ENCODE measurements at regions of chr2 and their contacts with region 1.

Region 1: GRCh38 chr2:217650716-217651360 is 352.0 kb downstream of the TNS1 start:
- DNase-seq: peak; percentile 43
- ATAC-seq: peak; percentile 87
- H3K4me3 Mint-ChIP-seq: no peak overlapping the region
- H3K27ac Mint-ChIP-seq: no peak overlapping the region
- H3K4me1 Mint-ChIP-seq: peaks cover 3% of the 10 kb centered on the region
- H3K27me3 Mint-ChIP-seq: peaks cover 2% of the 10 kb centered on the region

Region 2: GRCh38 chr2:217301142-217301925 is 349.5 kb before region 1 on chr2:
- CTCF ChIA-PET with region 1: no interaction called
- POLR2A ChIA-PET with region 1: no interaction called
- intact Hi-C with region 1: no loop called
- DNase-seq: no peak
- ATAC-seq: no peak
- H3K4me3 Mint-ChIP-seq: no peak overlapping the region
- H3K27ac Mint-ChIP-seq: no peak overlapping the region
- H3K4me1 Mint-ChIP-seq: no peaks in the 10 kb centered on the region
- H3K27me3 Mint-ChIP-seq: no peaks in the 10 kb centered on the region

Region 3: DNA sequence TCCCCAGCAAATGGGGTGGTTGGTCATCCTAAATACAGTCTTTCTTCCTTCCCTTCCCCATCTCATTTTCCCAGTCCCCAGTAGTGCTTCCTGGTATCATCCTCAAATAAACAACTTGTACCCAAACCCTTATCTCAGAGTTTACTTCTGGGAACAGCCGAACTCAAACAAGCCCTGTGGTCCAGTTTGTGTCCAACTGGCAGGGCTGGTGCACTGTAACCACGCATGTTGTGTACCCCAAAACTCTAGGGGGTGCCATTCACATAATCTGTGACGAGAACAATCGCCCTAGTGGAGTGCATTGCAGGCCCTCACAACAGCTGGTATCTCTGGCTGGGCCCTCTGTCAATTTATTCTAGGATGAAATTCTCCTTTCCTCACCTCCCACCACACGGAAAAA is 14.3 kb before region 1 on chr2:
- CTCF ChIA-PET with region 1: interaction called, 12 read pairs
- POLR2A ChIA-PET with region 1: no interaction called
- intact Hi-C with region 1: no loop called
- DNase-seq: no peak
- ATAC-seq: no peak
- H3K4me3 Mint-ChIP-seq: no peak overlapping the region
- H3K27ac Mint-ChIP-seq: no peak overlapping the region
- H3K4me1 Mint-ChIP-seq: no peaks in the 10 kb centered on the region
- H3K27me3 Mint-ChIP-seq: no peaks in the 10 kb centered on the region

Region 4: GRCh38 chr2:217666338-217666737 is 15.5 kb after region 1 on chr2:
- CTCF ChIA-PET with region 1: interaction called, 11 read pairs
- POLR2A ChIA-PET with region 1: no interaction called
- intact Hi-C with region 1: no loop called
- DNase-seq: peak; percentile 24
- ATAC-seq: peak; percentile 73
- H3K4me3 Mint-ChIP-seq: no peak overlapping the region
- H3K27ac Mint-ChIP-seq: no peak overlapping the region
- H3K4me1 Mint-ChIP-seq: peaks cover 17% of the 10 kb centered on the region
- H3K27me3 Mint-ChIP-seq: peaks cover 2% of the 10 kb centered on the region

Region 5: GRCh38 chr2:217713395-217714286 is 62.8 kb after region 1 on chr2:
- CTCF ChIA-PET with region 1: interaction called, 13 read pairs
- POLR2A ChIA-PET with region 1: no interaction called
- intact Hi-C with region 1: loop called (anchors 1 to 2 kb)
- DNase-seq: peak; percentile 86
- ATAC-seq: peak; percentile 78
- H3K4me3 Mint-ChIP-seq: no peak overlapping the region
- H3K27ac Mint-ChIP-seq: no peak overlapping the region
- H3K4me1 Mint-ChIP-seq: no peaks in the 10 kb centered on the region
- H3K27me3 Mint-ChIP-seq: peaks cover 2% of the 10 kb centered on the region

Region 6: GRCh38 chr2:217756375-217757107 is 105.7 kb after region 1 on chr2:
- CTCF ChIA-PET with region 1: interaction called, 4 read pairs
- POLR2A ChIA-PET with region 1: no interaction called
- intact Hi-C with region 1: loop called (anchors 2 kb)
- DNase-seq: peak; percentile 89
- ATAC-seq: peak; percentile 84
- H3K4me3 Mint-ChIP-seq: peak overlapping the region; percentile 61
- H3K27ac Mint-ChIP-seq: peak overlapping the region; percentile 82
- H3K4me1 Mint-ChIP-seq: peaks cover 24% of the 10 kb centered on the region
- H3K27me3 Mint-ChIP-seq: peaks cover 4% of the 10 kb centered on the region

Region 7: DNA sequence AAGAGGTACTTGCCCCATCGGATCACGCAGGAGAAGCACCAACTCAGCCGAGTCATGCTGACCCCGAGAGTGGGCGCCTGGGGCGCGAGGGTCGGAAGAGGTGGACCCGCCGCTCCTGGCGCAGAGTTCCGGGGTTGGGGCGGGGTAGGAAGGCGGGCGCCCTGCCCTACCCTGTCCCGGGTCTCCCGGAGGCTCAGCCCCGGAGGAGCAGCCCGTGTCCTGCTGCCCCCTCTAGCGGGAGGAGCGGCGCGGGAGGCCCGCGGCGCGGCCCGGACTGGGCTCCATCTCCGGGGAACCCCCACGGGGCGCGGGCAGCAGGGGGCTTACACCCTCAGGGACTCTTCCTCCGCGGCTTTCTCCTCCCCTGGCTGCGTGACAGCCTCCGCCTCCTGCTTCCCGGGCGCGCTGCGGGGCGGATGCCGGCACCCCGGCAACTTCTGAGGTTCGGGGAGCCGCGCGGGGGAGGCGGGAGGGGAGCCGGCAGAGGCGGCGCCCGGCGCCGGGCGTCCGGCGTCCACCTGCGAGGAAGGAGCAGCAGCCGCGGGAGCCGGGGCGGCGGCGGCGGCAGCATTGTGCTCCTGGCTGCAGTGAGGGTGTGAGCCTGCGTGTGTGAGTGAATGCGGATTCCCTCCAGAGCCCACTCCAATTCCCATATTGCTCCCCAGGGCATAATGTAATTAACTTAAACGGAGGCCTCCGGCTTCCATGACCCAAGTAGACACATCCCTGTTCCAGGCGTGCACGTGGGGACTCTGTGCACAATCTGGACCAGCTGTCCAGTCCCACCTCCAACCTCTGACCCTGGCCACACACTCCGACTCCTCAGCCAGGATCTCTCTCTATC is 359.5 kb after region 1 on chr2:
- CTCF ChIA-PET with region 1: no interaction called
- POLR2A ChIA-PET with region 1: no interaction called
- intact Hi-C with region 1: no loop called
- DNase-seq: peak; percentile 48
- ATAC-seq: peak; percentile 78
- H3K4me3 Mint-ChIP-seq: peak overlapping the region; percentile 50
- H3K27ac Mint-ChIP-seq: no peak overlapping the region
- H3K4me1 Mint-ChIP-seq: peaks cover 10% of the 10 kb centered on the region
- H3K27me3 Mint-ChIP-seq: peaks cover 34% of the 10 kb centered on the region

Measured in activated CD4-positive, alpha-beta T cell treated with anti-CD3 and anti-CD28 coated beads for 36 hours (primary cell).